ENCODE measurements at regions of chr5 and their contacts with region 1.

Region 1: DNA sequence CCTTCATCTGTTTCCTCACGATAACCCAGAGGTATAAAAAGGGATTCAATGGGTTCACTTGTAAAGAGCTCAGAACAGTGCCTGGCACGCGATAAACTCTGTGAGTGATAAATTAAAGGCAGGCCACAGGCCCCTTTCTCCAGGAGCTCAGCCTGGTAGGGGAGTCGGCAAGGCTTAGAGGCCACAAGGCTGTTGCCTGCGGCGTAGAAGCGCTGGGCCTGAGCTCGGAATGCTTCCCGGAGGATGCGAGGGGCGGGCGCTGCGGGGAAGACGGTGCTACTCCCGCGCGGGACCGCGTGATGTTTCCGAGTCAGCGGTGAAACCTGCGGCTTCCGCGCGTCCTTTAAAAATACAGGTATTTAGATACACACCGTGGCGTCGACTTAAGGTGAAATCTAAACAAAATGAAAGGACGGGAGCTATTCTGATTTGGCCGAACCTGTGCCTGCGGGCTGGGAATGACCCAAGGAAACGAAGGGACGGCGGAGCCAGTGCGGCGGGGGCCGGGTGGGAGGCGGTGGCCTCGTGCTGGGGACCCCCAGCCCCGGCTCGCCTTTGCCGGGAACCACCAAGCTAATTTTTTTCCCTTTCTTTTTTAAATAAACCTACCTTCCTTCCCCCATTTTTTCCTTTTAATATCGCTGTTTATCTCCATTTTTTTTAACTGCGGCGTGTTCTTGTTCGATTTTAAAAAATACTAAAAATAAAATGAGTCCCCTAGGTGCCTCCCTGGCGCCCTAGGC is 6.2 kb downstream of the NKX2-5 start:
- DNase-seq: peak in 1 of 3 donors; percentile 45
- H3K4me3 ChIP-seq: peak overlapping the region in 3 of 7 experiments; percentile 11 to 57 (median 49)
- H3K27ac ChIP-seq: no peak overlapping the region
- H3K4me1 ChIP-seq: peaks cover 0 to 29% (median 11%) of the 10 kb centered on the region in 4 experiments
- H3K27me3 ChIP-seq: peaks cover 5 to 99% (median 56%) of the 10 kb centered on the region in 5 experiments

Region 2: GRCh38 chr5:173245319-173246134 is 16.7 kb after region 1 on chr5:
- CTCF ChIA-PET with region 1: interaction called, 11 read pairs
- POLR2A ChIA-PET with region 1: interaction called, 3 read pairs
- DNase-seq: peak in 1 of 3 donors; percentile 40
- H3K4me3 ChIP-seq: no peak overlapping the region
- H3K27ac ChIP-seq: no peak overlapping the region
- H3K4me1 ChIP-seq: peaks cover 0 to 13% (median 7%) of the 10 kb centered on the region in 4 experiments
- H3K27me3 ChIP-seq: peaks cover 23 to 100% (median 59%) of the 10 kb centered on the region in 5 experiments